ENCODE measurements at regions of chr3 and their contacts with region 1.

Region 1: GRCh38 chr3:120470870-120471269 is 20.1 kb upstream of the FSTL1 start:
- DNase-seq: no peak
- H3K4me3 ChIP-seq: no peak overlapping the region
- CTCF ChIP-seq: no peak

Region 2: DNA sequence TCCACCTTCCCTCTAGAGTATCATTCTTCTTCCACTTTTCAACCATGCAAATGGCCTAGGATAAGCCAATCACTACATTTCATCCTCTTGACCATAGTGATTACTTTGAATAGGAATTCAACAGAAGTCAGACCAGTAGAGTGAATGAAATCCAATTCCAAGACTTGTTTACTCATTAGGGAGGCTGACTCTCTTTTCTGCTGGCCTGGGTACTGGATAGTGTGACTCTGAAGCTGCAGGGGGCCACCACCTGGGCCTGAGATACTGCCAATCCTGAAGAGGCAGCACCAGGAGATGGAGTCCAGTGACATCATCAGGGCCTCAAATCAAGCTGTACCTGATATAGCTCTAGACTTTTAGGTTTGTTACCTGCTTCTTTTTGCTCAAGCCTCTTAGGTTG is 13.0 kb before region 1 on chr3:
- CTCF ChIA-PET with region 1: interaction called, 19 read pairs
- POLR2A ChIA-PET with region 1: interaction called, 3 read pairs
- DNase-seq: no peak
- H3K4me3 ChIP-seq: no peak overlapping the region
- CTCF ChIP-seq: no peak